ENCODE measurements at regions of chr20 and their contacts with region 1.

Region 1: GRCh38 chr20:46689082-46689754 is at the start of gene TP53RK:
- DNase-seq: peak; percentile 100
- H3K4me3 ChIP-seq: peak within 1 kb of the TSS; percentile 59
- H3K27ac ChIP-seq: peak within 1 kb of the TSS; percentile 90
- H3K4me1 ChIP-seq: peaks cover 10% of the 10 kb centered on the region
- H3K27me3 ChIP-seq: no peaks in the 10 kb centered on the region
- CTCF ChIP-seq: peak; percentile 17
- total RNA-seq, gene TP53RK: 9.2 to 11.1 TPM

Region 2: DNA sequence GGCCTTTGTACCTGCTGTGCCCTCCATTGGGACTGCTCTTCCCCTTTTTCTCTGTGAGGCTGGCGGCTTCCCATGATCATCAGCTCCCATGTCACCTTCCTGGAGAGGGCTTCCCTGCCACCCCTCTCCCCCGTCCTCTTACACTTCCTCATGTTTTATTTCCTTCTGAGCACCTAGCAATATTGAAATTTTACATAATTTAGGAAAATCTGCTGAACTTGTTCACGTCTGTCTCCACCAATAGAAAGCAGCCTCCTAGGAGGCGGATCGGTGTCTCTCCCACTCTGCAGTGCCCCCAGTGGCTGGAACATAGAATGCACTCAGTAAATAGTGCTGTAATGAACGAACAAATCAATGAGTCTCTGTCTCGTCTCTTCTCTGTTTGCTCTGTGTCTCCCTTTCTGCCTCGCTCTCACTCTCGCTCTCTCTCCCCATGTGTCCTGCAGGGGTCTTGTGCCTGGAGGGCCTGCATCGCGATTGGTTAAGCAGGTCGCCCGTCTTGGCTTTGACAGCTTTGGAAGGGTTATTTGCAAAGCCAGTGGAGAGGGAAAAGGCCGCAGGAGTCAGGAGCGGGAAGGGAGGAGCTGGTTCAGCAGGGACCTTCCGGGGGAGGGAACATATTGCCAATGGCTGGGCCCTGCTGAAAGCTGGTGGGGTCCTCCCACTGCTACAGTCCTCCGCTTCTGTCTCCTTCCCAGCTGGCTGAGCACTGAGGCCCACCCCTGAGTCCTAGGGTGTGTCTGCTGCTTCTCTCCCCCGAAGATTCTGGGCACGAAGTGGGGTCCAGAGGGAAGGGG is 126.6 kb before region 1 on chr20:
- intact Hi-C with region 1: loop called (anchors 10 kb)
- DNase-seq: peak; percentile 74
- H3K4me3 ChIP-seq: peak overlapping the region; percentile 16
- H3K27ac ChIP-seq: no peak overlapping the region
- H3K4me1 ChIP-seq: no peaks in the 10 kb centered on the region
- H3K27me3 ChIP-seq: no peaks in the 10 kb centered on the region
- CTCF ChIP-seq: peak; percentile 82

Region 3: DNA sequence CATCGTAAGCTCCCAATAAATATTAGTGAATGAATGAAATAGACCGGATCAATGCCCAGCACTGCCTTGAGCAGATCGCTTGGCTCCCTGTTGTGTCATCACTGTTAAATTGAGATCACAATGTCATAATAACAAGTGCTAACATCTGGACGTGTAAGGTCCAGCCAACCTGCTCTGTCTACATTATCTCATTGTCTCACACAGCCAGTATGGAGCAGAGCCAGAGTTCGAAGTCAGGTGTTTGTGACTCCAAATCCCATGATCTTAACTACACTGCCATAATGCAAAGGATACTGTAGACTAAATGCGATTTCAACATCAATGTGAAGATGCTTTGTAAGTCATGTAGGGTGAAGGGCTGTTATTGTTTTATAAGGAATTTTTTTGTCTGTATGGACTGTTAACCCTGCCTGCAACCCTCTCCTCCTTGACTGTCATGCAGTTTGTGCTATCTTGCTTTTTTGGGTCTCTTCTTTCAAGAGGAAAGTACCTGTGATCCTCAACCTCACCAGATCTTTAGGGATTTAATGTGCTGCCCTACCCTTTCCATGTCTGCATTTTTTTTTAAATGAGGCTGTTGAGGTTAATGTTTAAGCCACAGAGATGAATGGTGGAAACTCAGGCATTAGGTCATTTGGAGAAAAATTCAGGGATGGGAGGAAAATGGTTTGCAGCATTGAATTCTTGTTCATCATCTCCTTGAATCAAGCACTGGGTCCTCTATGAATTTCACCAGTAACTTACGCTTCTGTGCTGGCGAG is 89.8 kb before region 1 on chr20:
- intact Hi-C with region 1: no loop called
- DNase-seq: no peak
- H3K4me3 ChIP-seq: no peak overlapping the region
- H3K27ac ChIP-seq: no peak overlapping the region
- H3K4me1 ChIP-seq: no peaks in the 10 kb centered on the region
- H3K27me3 ChIP-seq: no peaks in the 10 kb centered on the region
- CTCF ChIP-seq: no peak

Region 4: GRCh38 chr20:46638134-46638897 is 50.9 kb before region 1 on chr20:
- intact Hi-C with region 1: no loop called
- DNase-seq: no peak
- H3K4me3 ChIP-seq: no peak overlapping the region
- H3K27ac ChIP-seq: no peak overlapping the region
- H3K4me1 ChIP-seq: no peaks in the 10 kb centered on the region
- H3K27me3 ChIP-seq: no peaks in the 10 kb centered on the region
- CTCF ChIP-seq: no peak